ENCODE measurements at regions of chr16 and their contacts with region 1.

Region 1: DNA sequence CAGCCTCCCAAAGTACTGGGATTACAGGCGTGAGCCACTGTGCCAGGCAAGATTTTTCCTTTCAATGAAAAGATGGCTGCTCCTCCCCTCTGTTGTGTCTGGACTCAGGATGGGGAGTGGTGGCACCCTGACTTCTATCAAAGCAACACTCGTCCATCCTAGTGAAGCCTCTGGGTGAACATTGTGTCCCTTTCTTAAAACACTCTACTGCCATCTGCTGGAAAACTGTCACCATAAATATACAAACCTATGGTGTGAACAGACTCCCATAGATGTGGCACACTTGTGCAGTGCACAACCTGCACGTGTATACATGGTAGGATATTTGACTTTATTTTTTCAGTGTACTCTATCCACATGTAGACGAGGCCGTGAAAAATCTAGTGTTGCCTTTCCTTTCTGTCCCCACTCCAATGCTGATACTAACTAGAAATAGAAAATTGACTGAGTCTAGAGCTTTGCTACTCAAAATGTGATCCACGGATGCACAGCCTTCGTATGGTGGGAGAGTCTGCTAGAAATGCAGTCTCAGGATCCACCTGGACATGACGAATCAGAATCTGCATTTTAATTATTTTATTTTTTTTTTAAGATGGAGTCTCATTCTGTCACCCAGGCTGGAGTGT is 55.9 kb upstream of the PLCG2 start:
- DNase-seq: peak; percentile 72
- H3K4me3 Mint-ChIP-seq: no peak overlapping the region
- H3K27ac Mint-ChIP-seq: no peak overlapping the region
- H3K4me1 Mint-ChIP-seq: no peaks in the 10 kb centered on the region
- H3K27me3 Mint-ChIP-seq: no peaks in the 10 kb centered on the region
- CTCF ChIP-seq: peak; percentile 66

Region 2: GRCh38 chr16:81006814-81007696 is 716.2 kb before region 1 on chr16 and contains the starts of genes CENPN and CMC2:
- CTCF ChIA-PET with region 1: no interaction called
- intact Hi-C with region 1: loop called (anchors 10 kb)
- DNase-seq: peak; percentile 98
- H3K4me3 Mint-ChIP-seq: peak within 1 kb of the TSS; percentile 95
- H3K27ac Mint-ChIP-seq: peak within 1 kb of the TSS; percentile 99
- H3K4me1 Mint-ChIP-seq: peaks cover 29% of the 10 kb centered on the region
- H3K27me3 Mint-ChIP-seq: no peaks in the 10 kb centered on the region
- CTCF ChIP-seq: no peak
- total RNA-seq, gene CENPN: 72.2 and 81.5 TPM in 2 replicates
- total RNA-seq, gene CMC2: 111 and 123 TPM in 2 replicates

Region 3: GRCh38 chr16:81261049-81261648 is 462.1 kb before region 1 on chr16:
- CTCF ChIA-PET with region 1: interaction called, 10 read pairs
- intact Hi-C with region 1: no loop called
- DNase-seq: peak; percentile 58
- H3K4me3 Mint-ChIP-seq: no peak overlapping the region
- H3K27ac Mint-ChIP-seq: no peak overlapping the region
- H3K4me1 Mint-ChIP-seq: peaks cover under 1% of the 10 kb centered on the region
- H3K27me3 Mint-ChIP-seq: no peaks in the 10 kb centered on the region
- CTCF ChIP-seq: peak; percentile 81

Region 4: DNA sequence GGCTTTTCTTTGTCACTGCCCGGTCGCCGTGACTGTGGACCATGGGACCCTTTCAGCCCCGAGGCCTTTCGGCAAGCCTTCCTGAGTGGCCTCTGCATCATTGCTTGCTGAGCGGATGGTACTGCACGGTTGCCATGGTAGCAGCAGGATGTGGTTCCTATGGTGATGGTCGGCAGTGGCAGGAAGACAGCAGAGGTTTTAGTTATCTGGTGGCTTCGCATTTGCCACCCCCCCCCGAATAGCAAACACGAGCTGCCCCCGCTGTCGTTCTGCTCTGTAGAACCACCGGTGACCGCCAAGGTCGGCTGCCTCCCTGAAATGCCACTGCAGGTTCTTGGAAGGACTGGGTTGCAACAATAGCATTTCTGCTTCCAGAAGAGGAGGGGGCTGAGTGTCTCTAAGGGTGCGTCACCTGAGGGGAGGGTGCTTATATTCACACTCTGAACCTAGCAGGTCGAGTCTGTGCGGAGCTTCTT is 202.0 kb before region 1 on chr16:
- CTCF ChIA-PET with region 1: no interaction called
- intact Hi-C with region 1: no loop called
- DNase-seq: no peak
- H3K4me3 Mint-ChIP-seq: no peak overlapping the region
- H3K27ac Mint-ChIP-seq: no peak overlapping the region
- H3K4me1 Mint-ChIP-seq: peaks cover 48% of the 10 kb centered on the region
- H3K27me3 Mint-ChIP-seq: no peaks in the 10 kb centered on the region
- CTCF ChIP-seq: no peak

Region 5: GRCh38 chr16:81623363-81624102 is 99.7 kb before region 1 on chr16:
- CTCF ChIA-PET with region 1: no interaction called
- intact Hi-C with region 1: loop called (anchors 1 kb)
- DNase-seq: peak; percentile 66
- H3K4me3 Mint-ChIP-seq: no peak overlapping the region
- H3K27ac Mint-ChIP-seq: no peak overlapping the region
- H3K4me1 Mint-ChIP-seq: no peaks in the 10 kb centered on the region
- H3K27me3 Mint-ChIP-seq: no peaks in the 10 kb centered on the region
- CTCF ChIP-seq: peak; percentile 75

Region 6: DNA sequence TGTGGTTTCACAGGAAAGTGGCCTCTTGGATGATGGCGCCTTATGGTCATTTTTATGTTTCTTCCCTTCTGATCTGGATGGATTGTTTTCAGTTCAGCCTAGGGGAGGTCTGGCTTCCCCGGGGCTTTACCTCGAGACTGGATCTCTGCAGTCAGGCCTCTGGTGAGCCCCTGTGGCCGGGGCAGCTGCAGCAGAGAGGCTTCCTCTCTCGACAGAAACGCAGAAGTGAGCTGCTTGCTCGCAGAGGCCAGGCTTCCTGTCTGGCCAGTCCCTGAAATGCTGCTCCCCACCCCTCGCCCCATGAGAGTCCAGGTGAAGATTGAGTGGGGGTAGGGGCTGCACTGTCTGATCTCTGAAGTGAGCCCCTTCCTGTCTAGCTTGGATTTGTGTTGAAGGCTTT is 99.9 kb after region 1 on chr16:
- CTCF ChIA-PET with region 1: no interaction called
- intact Hi-C with region 1: no loop called
- DNase-seq: no peak
- H3K4me3 Mint-ChIP-seq: no peak overlapping the region
- H3K27ac Mint-ChIP-seq: no peak overlapping the region
- H3K4me1 Mint-ChIP-seq: no peaks in the 10 kb centered on the region
- H3K27me3 Mint-ChIP-seq: peaks cover 61% of the 10 kb centered on the region
- CTCF ChIP-seq: no peak